Esophagus muscularis mucosa (tissue), 4 donors: ENCODE measurements at regions of chr13 and their contacts with region 1.

Region 1: GRCh38 chr13:31476266-31476665 is 263.1 kb upstream of the RXFP2 start:
- DNase-seq: no peak
- H3K4me3 ChIP-seq: no peak overlapping the region
- H3K27ac ChIP-seq: no peak overlapping the region
- H3K4me1 ChIP-seq: no peaks in the 10 kb centered on the region
- H3K27me3 ChIP-seq: peaks cover 0 to 3% (median 0%) of the 10 kb centered on the region in 4 donors
- CTCF ChIP-seq: no peak
- EP300 ChIP-seq: no peak
- POLR2A ChIP-seq: no peak

Region 2: DNA sequence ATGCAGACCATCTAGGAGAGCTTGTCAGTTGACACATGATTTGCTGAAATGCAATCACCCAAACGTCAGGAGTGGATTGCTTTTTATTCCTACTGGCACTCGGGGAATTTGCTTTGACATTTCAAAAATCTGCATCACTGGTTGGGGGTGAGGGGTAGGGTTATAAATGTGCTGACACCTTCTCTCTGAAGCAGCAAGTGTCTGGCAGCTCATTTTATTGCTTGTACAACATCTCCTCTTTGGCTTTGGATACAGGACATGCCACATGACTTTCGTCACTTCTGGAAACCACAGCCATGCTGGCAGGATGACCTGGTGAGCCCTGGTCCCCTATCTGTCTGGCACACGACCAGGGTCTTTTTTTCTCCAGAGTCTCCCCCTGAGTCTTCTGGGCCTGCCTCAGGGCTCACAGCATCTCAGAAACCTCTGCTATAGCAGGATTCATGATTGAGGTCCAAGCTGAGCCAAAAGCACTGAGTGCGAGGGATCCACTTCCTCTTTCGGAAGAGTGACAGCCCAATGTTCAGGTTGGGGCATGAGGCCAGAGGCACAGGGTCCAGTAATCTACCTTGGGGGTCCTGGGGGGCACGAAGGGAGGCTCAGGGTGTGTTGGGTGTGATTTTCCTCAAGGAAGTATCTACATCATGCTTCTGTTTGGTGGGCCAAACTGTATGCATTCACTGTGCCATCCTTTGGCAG is 374.6 kb before region 1 on chr13:
- intact Hi-C with region 1: no loop called
- DNase-seq: no peak
- H3K4me3 ChIP-seq: no peak overlapping the region
- H3K27ac ChIP-seq: no peak overlapping the region
- H3K4me1 ChIP-seq: peaks cover 0 to 8% (median 0%) of the 10 kb centered on the region in 4 donors
- H3K27me3 ChIP-seq: peaks cover 0 to 32% (median 0%) of the 10 kb centered on the region in 4 donors
- CTCF ChIP-seq: no peak
- EP300 ChIP-seq: no peak
- POLR2A ChIP-seq: no peak

Region 3: GRCh38 chr13:31409678-31410356 is 66.4 kb before region 1 on chr13:
- intact Hi-C with region 1: no loop called
- DNase-seq: peak; percentile 45
- H3K4me3 ChIP-seq: no peak overlapping the region
- H3K27ac ChIP-seq: peak overlapping the region in 1 of 4 donors; percentile 38
- H3K4me1 ChIP-seq: no peaks in the 10 kb centered on the region
- H3K27me3 ChIP-seq: peaks cover 0 to 4% (median 0%) of the 10 kb centered on the region in 4 donors
- CTCF ChIP-seq: no peak
- EP300 ChIP-seq: no peak
- POLR2A ChIP-seq: no peak

Region 4: GRCh38 chr13:31444266-31444856 is 31.9 kb before region 1 on chr13:
- intact Hi-C with region 1: loop called (anchors 2 kb)
- DNase-seq: no peak
- H3K4me3 ChIP-seq: no peak overlapping the region
- H3K27ac ChIP-seq: no peak overlapping the region
- H3K4me1 ChIP-seq: no peaks in the 10 kb centered on the region
- H3K27me3 ChIP-seq: no peaks in the 10 kb centered on the region
- CTCF ChIP-seq: no peak
- EP300 ChIP-seq: no peak
- POLR2A ChIP-seq: no peak

Region 5: DNA sequence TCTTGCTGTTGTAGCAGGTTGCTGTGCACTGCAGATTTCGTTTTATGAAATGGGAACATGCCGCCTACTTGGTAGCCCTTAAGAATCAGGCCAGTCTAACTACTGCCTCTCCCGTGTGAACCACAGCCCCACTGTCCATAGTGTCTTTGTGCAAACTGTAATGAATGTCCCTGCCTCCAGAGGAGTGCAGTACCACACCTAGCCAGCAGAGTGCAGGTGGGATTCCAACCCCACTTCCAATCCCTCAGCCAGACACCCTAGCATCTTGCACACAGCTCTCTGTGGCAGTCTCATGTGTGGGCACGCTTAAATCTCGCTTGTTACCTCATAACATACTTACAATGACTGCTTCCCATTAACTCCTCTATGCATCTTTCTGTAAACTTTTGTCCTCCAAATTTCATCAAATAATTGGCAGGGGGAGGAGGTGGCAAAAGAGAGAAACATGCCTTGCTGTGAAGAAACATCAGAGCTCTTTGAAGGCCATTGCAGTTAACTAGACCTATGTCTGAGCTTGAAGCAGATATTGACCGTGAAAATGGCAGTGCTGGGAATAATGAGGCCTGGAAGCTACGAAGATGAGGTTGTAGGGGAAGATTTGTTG is 791.7 kb after region 1 on chr13:
- intact Hi-C with region 1: no loop called
- DNase-seq: no peak
- H3K4me3 ChIP-seq: no peak overlapping the region
- H3K27ac ChIP-seq: no peak overlapping the region
- H3K4me1 ChIP-seq: peaks cover 22 to 34% (median 30%) of the 10 kb centered on the region in 4 donors
- H3K27me3 ChIP-seq: no peaks in the 10 kb centered on the region
- CTCF ChIP-seq: peak; percentile 42 to 45 (median 45)
- EP300 ChIP-seq: no peak
- POLR2A ChIP-seq: no peak

Region 6: GRCh38 chr13:32323912-32324311 is 847.6 kb after region 1 on chr13:
- intact Hi-C with region 1: no loop called
- DNase-seq: no peak
- H3K4me3 ChIP-seq: no peak overlapping the region
- H3K27ac ChIP-seq: no peak overlapping the region
- H3K4me1 ChIP-seq: no peaks in the 10 kb centered on the region
- H3K27me3 ChIP-seq: no peaks in the 10 kb centered on the region
- CTCF ChIP-seq: no peak
- EP300 ChIP-seq: no peak
- POLR2A ChIP-seq: no peak